BJ (cell line): ENCODE measurements at regions of chr3 and their contacts with region 1.

Region 1: DNA sequence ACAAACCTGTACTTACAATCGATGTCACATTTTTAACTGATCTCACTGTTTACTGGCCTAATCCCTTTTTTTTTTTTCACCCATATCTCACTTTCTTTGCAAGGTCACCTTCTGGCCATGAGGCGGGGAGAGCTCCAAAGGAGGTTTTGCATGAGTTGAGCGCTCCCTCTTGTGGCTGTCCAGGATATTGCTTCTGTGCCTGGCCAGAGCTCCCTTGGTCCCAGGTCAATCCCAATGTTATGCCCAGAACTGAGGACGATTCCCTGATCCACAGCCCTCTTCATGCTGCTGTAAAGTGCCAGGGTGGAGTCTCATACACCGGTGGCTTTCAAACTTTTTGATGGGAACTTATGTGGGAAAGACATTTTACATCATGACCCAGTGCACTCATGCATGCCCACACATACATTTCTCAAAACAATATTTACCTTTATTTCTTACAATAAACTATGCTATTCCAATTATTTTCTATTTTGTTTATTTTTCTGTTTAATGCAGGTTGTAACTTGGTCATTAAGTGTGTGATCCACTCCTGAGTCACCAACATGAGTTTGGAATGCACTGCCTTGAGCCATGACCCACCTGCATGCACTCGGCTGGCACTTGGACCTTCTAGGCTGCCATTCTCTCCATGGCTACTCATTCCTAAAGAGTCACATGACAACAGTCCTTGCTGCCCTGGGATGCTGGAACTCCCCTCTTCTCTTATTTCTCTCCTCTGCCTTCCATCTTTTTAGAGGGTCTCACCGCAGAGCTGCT is 9.6 kb upstream of the SST start:
- DNase-seq: no peak
- H3K4me3 ChIP-seq: no peak overlapping the region
- H3K27me3 ChIP-seq: no peaks in the 10 kb centered on the region; the same call in 1 of the 2 replicates
- CTCF ChIP-seq: peak; percentile 93

Region 2: GRCh38 chr3:187139126-187139894 is 540.5 kb before region 1 on chr3 and contains the start of gene RPL39L:
- CTCF ChIA-PET with region 1: interaction called, 10 read pairs
- POLR2A ChIA-PET with region 1: no interaction called
- DNase-seq: peak; percentile 23
- H3K4me3 ChIP-seq: peak within 1 kb of the TSS; percentile 74
- H3K27me3 ChIP-seq: peaks cover 3% of the 10 kb centered on the region
- CTCF ChIP-seq: peak; percentile 96
- polyA plus RNA-seq, gene RPL39L: 16.2 and 23.3 TPM in 2 replicates

Region 3: GRCh38 chr3:187227658-187228258 is 452.1 kb before region 1 on chr3:
- CTCF ChIA-PET with region 1: interaction called, 201 read pairs
- POLR2A ChIA-PET with region 1: no interaction called
- DNase-seq: peak; percentile 58
- H3K4me3 ChIP-seq: no peak overlapping the region
- H3K27me3 ChIP-seq: no peaks in the 10 kb centered on the region
- CTCF ChIP-seq: no peak

Region 4: DNA sequence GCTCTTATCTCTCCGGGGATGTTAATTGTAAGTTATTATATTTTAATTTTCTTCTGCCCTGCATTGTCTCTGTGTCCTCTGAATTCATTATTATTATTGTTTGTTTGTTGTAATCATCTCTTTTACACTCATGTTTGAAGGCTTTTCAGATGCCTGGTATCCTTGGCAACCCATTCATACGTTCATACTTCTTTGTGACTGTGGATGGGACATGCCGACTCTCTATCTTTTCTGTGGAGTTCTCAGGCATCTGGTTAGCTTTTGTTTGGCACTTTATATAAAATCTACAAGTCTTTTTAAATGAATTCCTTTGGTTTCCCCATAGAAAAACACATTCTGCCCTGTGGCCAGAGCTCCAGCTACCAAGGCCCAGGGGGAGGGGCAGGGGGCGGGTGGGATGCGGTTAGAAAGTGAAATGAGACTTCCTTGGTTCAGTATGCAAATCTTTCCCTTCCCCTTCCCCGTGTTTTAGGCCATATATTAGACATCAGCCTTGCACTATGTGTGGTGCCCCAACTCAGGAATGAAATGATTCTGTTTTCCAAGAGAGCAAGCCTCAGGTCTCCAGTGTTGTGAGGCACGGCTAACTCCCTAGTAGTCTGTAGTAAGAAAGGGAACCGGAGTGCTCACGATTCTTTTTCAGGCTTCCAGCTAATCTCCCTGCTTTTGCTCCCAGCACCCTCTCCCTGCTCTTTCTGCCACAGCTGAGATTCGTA is 88.8 kb before region 1 on chr3:
- CTCF ChIA-PET with region 1: interaction called, 16 read pairs
- POLR2A ChIA-PET with region 1: no interaction called
- DNase-seq: no peak
- H3K4me3 ChIP-seq: no peak overlapping the region
- H3K27me3 ChIP-seq: no peaks in the 10 kb centered on the region
- CTCF ChIP-seq: no peak

Region 5: DNA sequence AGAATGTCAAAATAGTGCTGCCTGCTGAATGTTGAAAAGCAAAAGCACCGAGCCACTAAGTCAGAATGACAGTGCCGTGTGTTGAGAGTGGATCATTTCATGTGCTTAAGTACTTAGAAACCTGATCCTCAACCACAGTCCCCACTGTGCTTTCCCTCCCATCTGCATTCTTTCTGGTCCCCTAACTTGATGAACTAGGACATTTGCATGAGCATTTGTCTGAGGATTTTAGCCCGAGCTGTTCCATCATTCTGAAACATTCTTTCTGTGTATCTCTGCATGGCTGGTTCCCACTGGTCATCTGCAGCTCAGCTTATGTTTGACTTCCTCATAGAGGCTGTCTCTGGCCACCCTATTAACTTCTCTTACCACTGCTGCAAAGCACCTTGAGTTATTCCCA is 51.6 kb before region 1 on chr3:
- CTCF ChIA-PET with region 1: interaction called, 18 read pairs
- POLR2A ChIA-PET with region 1: no interaction called
- DNase-seq: no peak
- H3K4me3 ChIP-seq: no peak overlapping the region
- H3K27me3 ChIP-seq: no peaks in the 10 kb centered on the region
- CTCF ChIP-seq: no peak

Region 6: GRCh38 chr3:187714404-187714979 is 34.7 kb after region 1 on chr3:
- CTCF ChIA-PET with region 1: interaction called, 118 read pairs
- POLR2A ChIA-PET with region 1: no interaction called
- DNase-seq: no peak
- H3K4me3 ChIP-seq: no peak overlapping the region
- H3K27me3 ChIP-seq: no peaks in the 10 kb centered on the region; the same call in 1 of the 2 replicates
- CTCF ChIP-seq: peak; percentile 87